ENCODE measurements at regions of chr19 and their contacts with region 1.

Region 1: GRCh38 chr19:7575434-7576040 is 20.1 kb upstream of the CAMSAP3 start:
- DNase-seq: no peak
- H3K4me3 ChIP-seq: no peak overlapping the region
- H3K27ac ChIP-seq: no peak overlapping the region
- H3K4me1 ChIP-seq: no peaks in the 10 kb centered on the region
- H3K27me3 ChIP-seq: no peaks in the 10 kb centered on the region
- CTCF ChIP-seq: no peak
- EP300 ChIP-seq: no peak
- POLR2A ChIP-seq: no peak

Region 2: GRCh38 chr19:7680606-7681339 is 105.2 kb after region 1 on chr19 and contains the start of gene TRAPPC5:
- intact Hi-C with region 1: loop called (anchors 10 kb)
- DNase-seq: peak; percentile 89 to 97
- H3K4me3 ChIP-seq: peak within 1 kb of the TSS; percentile 94 to 100 (median 99)
- H3K27ac ChIP-seq: peak within 1 kb of the TSS; percentile 88 to 96 (median 92)
- H3K4me1 ChIP-seq: peaks cover 0 to 28% (median 24%) of the 10 kb centered on the region in 4 donors
- H3K27me3 ChIP-seq: peaks cover 0 to 45% (median 25%) of the 10 kb centered on the region in 3 donors
- CTCF ChIP-seq: peak in 4 of 7 experiments; percentile 24 to 99 (median 97)
- EP300 ChIP-seq: no peak
- POLR2A ChIP-seq: no peak
- total RNA-seq, gene TRAPPC5: 4.5 to 20.6 (median 15.1) TPM